ENCODE measurements at regions of chr5 and their contacts with region 1.

Region 1: DNA sequence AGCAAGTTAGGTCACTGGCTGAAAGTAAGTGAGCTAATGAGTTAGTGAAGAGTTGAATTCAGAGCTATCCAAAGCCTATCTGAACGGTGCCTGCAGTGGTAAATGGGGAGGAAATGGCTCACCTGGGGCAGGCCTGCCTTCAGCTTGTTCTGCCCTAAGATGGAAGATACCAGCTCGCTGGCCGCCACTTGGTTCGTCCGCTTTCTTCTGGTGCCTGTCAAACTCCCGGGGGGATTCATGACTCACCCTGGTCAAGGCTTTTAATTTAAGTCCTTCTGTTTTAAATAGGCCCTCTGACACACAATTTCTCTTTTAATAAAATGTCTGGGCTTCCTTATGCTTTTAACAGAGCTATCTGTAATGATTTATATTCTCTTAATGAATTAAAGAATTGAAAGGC is 78.8 kb downstream of the CFAP90 start:
- DNase-seq: no peak

Region 2: GRCh38 chr5:7717691-7718090 is 54.5 kb before region 1 on chr5:
- intact Hi-C with region 1: no loop called
- DNase-seq: no peak

Region 3: DNA sequence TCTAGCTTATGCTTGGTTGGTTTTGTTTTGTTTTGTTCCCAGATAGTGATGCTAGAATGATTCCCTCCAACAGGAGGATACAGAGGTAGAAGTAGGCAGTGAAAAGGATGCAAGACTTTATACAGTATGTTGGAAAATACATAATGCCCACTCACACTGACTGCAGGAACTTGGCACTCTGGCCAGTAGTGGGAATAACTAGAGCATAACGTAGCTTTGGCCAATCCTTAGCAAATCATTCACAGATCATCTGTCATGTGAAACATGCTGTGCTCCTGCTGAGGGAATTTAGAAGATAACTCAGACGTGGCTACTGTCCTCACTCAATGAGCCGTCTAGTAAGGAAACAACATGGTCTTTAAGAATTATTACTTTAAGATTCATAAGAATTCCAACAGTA is 65.3 kb after region 1 on chr5:
- intact Hi-C with region 1: loop called in 1 of 2 experiments (anchors 2 kb)
- DNase-seq: no peak

Measured in posterior vena cava (tissue), 2 donors.